Cardiac septum (tissue), 1 donor: ENCODE measurements at regions of chr10 and their contacts with region 1.

Region 1: DNA sequence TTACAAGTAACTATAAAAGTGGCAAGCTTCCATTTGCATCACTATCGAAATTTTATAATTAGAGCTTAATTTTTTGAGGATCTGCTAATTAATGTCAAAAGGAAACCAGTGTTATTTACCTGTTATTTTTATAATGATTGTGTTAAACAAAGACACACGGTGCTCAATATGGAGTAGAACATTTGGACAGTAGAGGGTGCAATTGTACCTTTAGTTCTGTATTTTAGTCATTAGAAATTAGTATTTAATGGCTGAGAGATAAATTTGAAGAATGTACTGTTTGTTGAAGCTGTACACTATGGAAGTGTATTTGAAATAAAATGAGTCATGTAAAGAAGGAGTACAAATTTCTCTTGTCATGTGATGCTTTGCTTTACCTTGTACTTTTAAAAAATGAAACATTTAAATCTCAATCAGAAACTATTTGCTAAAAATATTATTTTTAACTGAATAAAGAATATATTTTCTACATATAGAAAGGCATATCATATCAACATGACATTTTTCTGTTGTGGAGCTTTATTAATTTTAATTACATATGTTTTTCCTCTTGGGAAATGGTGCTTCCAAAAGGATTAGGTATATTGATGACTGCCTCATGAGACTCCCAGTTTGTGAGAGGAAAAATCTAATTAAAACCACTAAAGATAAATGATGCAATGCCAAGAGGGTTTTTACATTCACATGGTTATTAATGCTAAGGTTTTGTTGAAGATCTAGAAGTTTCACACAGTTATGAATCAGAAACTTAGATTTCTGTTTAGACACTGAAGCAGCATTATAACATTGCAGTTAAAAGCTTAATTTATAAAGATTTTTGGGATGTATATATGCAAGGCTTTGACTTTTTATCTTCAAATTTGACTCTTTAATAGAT is 10.4 kb upstream of the PRKG1 start:
- DNase-seq: no peak

Region 2: GRCh38 chr10:50850578-50851230 is 213.2 kb before region 1 on chr10:
- intact Hi-C with region 1: no loop called
- DNase-seq: no peak

Region 3: GRCh38 chr10:51950371-51950995 is 886.6 kb after region 1 on chr10:
- intact Hi-C with region 1: loop called (anchors 10 kb)
- DNase-seq: no peak